ENCODE measurements at regions of chr9 and their contacts with region 1.

Region 1: DNA sequence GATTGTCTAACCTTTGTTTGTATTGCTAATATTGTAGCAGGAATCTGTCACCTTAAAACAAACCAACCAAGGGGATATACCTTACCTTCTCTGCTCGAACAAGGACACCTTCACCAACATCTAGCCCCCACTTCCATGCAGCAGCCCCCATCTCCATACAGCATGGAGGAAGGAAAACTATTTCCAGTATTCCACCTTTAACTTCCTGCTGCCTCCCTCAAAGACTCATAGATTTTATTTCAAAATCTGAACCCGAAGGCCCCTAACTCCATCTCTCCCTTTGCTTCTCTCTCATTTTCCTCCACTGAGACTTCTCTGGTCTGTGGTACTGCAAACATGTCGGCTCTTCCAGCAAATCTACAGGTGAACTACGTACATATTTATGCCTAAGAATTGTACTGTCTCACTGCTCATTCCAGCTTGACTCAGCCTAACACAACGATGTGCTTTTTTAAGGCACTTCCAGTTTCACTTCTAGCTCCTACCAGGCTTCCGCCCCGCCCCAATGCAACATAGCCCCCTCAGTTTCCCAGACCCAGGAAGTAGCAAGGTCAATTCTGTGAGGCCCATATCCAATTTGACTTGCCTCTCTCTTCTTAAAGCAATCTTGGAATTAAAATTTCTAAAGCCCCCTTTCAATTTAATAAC is 70.7 kb upstream of the RNF38 start:
- DNase-seq: peak in 34 of 35 experiments; percentile 33 to 79 (median 52)
- ATAC-seq: peak; percentile 89 to 96 (median 95)
- H3K4me3 ChIP-seq: peak overlapping the region; percentile 40 to 44
- H3K4me3 Mint-ChIP-seq: peak overlapping the region; percentile 78 to 84 (median 83)
- H3K27ac ChIP-seq: peak overlapping the region; percentile 89
- H3K27ac Mint-ChIP-seq: peak overlapping the region; percentile 97 to 99
- H3K4me1 ChIP-seq: peaks cover 8 to 24% of the 10 kb centered on the region in 2 experiments
- H3K4me1 Mint-ChIP-seq: peaks cover 37 to 45% (median 45%) of the 10 kb centered on the region in 3 donors
- H3K27me3 ChIP-seq: no peaks in the 10 kb centered on the region
- H3K27me3 Mint-ChIP-seq: no peaks in the 10 kb centered on the region

Region 2: GRCh38 chr9:36152741-36153438 is 317.9 kb before region 1 on chr9:
- CTCF ChIA-PET with region 1: no interaction called
- POLR2A ChIA-PET with region 1: interaction called in 1 of 2 experiments, 10 read pairs
- DNase-seq: no peak
- ATAC-seq: no peak
- H3K4me3 ChIP-seq: no peak overlapping the region
- H3K4me3 Mint-ChIP-seq: peak overlapping the region in 2 of 3 donors; percentile 31 to 55
- H3K27ac ChIP-seq: peak overlapping the region; percentile 6
- H3K27ac Mint-ChIP-seq: peak overlapping the region; percentile 77 to 97
- H3K4me1 ChIP-seq: peaks cover 32 to 57% of the 10 kb centered on the region in 2 experiments
- H3K4me1 Mint-ChIP-seq: peaks cover 41 to 65% (median 62%) of the 10 kb centered on the region in 3 donors
- H3K27me3 ChIP-seq: no peaks in the 10 kb centered on the region
- H3K27me3 Mint-ChIP-seq: no peaks in the 10 kb centered on the region

Region 3: GRCh38 chr9:37119907-37120842 is 649.4 kb after region 1 on chr9 and contains the start of gene ZCCHC7:
- CTCF ChIA-PET with region 1: no interaction called
- POLR2A ChIA-PET with region 1: interaction called in 1 of 2 experiments, 13 read pairs
- DNase-seq: peak; percentile 93 to 98 (median 97)
- ATAC-seq: peak; percentile 95 to 97 (median 96)
- H3K4me3 ChIP-seq: peak within 1 kb of the TSS; percentile 83 to 85
- H3K4me3 Mint-ChIP-seq: peak within 1 kb of the TSS; percentile 86 to 97 (median 90)
- H3K27ac ChIP-seq: peak within 1 kb of the TSS; percentile 79
- H3K27ac Mint-ChIP-seq: peak within 1 kb of the TSS; percentile 98 to 99
- H3K4me1 ChIP-seq: peaks cover 7 to 20% of the 10 kb centered on the region in 2 experiments
- H3K4me1 Mint-ChIP-seq: peaks cover 37 to 42% (median 37%) of the 10 kb centered on the region in 3 donors
- H3K27me3 ChIP-seq: no peaks in the 10 kb centered on the region
- H3K27me3 Mint-ChIP-seq: no peaks in the 10 kb centered on the region
- total RNA-seq, gene ZCCHC7: 29.1 to 44.2 (median 33.5) TPM

Measured in T-cell (primary cell).